Gastrocnemius medialis (tissue), 4 donors: ENCODE measurements at regions of chr5 and their contacts with region 1.

Region 1: GRCh38 chr5:139341650-139342422 is at the start of gene PAIP2:
- DNase-seq: peak; percentile 94 to 96
- ATAC-seq: peak; percentile 92 to 95
- H3K4me3 ChIP-seq: peak within 1 kb of the TSS; percentile 89 to 98 (median 92)
- H3K27ac ChIP-seq: peak within 1 kb of the TSS; percentile 96 to 100 (median 98)
- H3K4me1 ChIP-seq: peaks cover 21 to 36% of the 10 kb centered on the region in 2 donors
- H3K27me3 ChIP-seq: no peaks in the 10 kb centered on the region
- CTCF ChIP-seq: peak; percentile 57 to 86 (median 80)
- POLR2A ChIP-seq: peak; percentile 92 to 96
- total RNA-seq, gene PAIP2: 111 to 148 (median 126) TPM

Region 2: GRCh38 chr5:139164020-139164419 is 177.8 kb before region 1 on chr5:
- in situ Hi-C with region 1: no loop called
- intact Hi-C with region 1: no loop called
- DNase-seq: no peak
- ATAC-seq: no peak
- H3K4me3 ChIP-seq: no peak overlapping the region
- H3K27ac ChIP-seq: no peak overlapping the region
- H3K4me1 ChIP-seq: peaks cover 7 to 9% of the 10 kb centered on the region in 2 donors
- H3K27me3 ChIP-seq: no peaks in the 10 kb centered on the region
- CTCF ChIP-seq: no peak
- POLR2A ChIP-seq: no peak

Region 3: GRCh38 chr5:139210585-139210984 is 131.3 kb before region 1 on chr5:
- in situ Hi-C with region 1: no loop called
- intact Hi-C with region 1: no loop called
- DNase-seq: no peak
- ATAC-seq: no peak
- H3K4me3 ChIP-seq: no peak overlapping the region
- H3K27ac ChIP-seq: no peak overlapping the region
- H3K4me1 ChIP-seq: peaks cover 3 to 10% of the 10 kb centered on the region in 2 donors
- H3K27me3 ChIP-seq: no peaks in the 10 kb centered on the region
- CTCF ChIP-seq: no peak
- POLR2A ChIP-seq: no peak

Region 4: DNA sequence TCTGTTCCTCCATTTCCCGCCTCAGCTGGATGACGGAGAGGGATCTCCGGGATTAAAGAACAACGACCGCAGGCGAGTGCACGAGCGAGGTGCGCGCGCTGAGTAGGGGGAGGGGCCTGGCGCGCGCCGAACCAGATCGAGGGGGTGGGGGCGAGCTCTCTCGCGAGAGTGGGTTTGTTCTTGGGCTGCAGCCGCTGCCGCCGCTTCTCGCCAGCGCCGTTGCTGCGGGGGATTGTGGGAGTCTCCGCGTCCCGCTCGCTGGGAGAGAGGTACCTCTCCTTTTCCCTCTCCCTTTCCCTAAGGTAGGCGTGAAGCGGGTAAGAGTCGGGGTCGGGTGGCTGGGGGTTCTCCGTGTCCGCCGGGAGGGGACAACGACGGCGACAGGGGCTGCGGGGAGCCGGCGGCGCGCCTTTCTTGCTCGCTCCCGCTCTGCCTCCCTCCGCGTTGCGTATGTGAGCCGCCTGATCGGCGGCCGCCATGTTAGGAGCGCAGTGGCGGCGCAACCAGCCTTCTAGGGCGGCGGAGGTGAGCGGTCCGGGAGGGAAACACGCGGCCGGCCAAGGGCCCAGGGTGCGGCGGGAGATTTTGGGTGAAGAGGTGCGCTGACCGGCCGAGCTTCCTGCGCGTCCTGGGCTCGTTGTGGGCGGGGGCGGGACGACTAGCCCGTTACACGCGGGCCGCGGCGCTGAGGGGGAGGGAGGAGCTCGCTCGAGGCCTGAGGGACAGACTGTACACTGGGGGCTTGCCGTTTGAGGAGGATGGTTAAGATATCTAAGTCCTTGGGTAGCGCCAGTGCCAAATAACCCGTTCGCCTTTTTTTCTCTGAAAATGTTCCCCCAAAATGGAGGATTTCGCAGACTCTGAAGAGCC is 48.1 kb before region 1 on chr5 and contains the start of gene MATR3:
- in situ Hi-C with region 1: loop called in 1 of 4 experiments (anchors 10 kb)
- intact Hi-C with region 1: loop called (anchors 1 kb)
- DNase-seq: peak; percentile 92 to 96
- ATAC-seq: peak; percentile 86 to 90
- H3K4me3 ChIP-seq: peak within 1 kb of the TSS; percentile 82 to 97 (median 86)
- H3K27ac ChIP-seq: peak within 1 kb of the TSS; percentile 93 to 100 (median 99)
- H3K4me1 ChIP-seq: peaks cover 42 to 43% of the 10 kb centered on the region in 2 donors
- H3K27me3 ChIP-seq: no peaks in the 10 kb centered on the region
- CTCF ChIP-seq: no peak
- POLR2A ChIP-seq: peak; percentile 98 to 99
- total RNA-seq, gene MATR3: 115 to 188 (median 156) TPM

Region 5: GRCh38 chr5:139371482-139372435 is 29.9 kb after region 1 on chr5:
- in situ Hi-C with region 1: no loop called
- intact Hi-C with region 1: loop called (anchors 2 kb)
- DNase-seq: no peak
- ATAC-seq: no peak
- H3K4me3 ChIP-seq: no peak overlapping the region
- H3K27ac ChIP-seq: peak overlapping the region; percentile 80 to 87 (median 86)
- H3K4me1 ChIP-seq: peaks cover 26 to 39% of the 10 kb centered on the region in 2 donors
- H3K27me3 ChIP-seq: no peaks in the 10 kb centered on the region
- CTCF ChIP-seq: no peak
- POLR2A ChIP-seq: no peak